Heart right ventricle (tissue), 16 donors: ENCODE measurements at regions of chr5 and their contacts with region 1.

Region 1: DNA sequence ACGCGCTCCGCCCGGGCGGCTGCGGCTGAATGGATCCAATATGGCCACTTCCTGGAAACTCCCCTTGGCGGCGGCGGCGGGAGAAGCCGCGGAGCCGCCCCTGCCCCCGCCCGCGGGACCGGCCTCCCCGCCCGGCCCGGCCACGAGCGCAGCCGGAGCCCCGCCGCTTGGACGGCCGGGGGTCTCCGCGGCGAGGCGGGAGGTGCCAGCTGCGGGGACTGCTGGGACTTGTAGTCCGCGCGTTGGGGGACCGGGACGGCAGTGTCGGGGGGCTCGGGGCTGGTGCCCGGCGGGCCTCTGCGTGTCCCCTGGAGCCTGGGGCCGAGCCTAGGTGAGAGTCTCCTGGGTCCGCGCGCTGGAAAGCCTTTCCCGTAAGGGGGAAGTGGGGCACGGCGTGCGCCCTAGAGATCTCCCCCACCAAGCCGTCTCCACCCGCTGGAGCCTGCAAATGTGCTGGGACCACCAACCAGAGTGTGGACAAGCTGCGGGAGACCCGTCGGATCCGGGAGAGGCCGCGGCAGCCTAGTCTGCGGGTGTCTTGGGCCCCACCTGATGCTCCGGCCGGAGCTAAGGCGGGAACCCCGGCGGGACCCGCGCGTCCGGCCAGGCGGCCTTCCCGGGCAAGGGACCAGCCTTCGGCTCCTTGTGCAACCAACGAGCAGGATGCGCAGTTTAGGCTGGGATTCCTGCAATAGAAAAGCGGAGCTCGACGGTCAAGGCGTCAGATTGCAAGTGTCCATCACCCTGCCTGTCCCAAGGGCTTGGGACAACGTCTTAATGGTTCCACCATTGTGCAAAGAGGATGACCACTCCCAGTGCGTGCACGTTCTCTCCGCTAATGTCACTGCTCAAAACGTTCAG is at the start of gene SEPTIN8:
- DNase-seq: peak; percentile 50 to 67
- ATAC-seq: peak; percentile 54 to 83 (median 64)
- H3K4me3 ChIP-seq: peak within 1 kb of the TSS; percentile 61 to 97 (median 87)
- H3K27ac ChIP-seq: peak within 1 kb of the TSS; percentile 64 to 93 (median 88)
- H3K4me1 ChIP-seq: peaks cover 3 to 55% (median 43%) of the 10 kb centered on the region in 9 donors
- H3K27me3 ChIP-seq: peaks cover 0 to 40% (median 0%) of the 10 kb centered on the region in 7 donors
- CTCF ChIP-seq: no peak
- total RNA-seq, gene SEPTIN8: 23.5 to 41.8 (median 31.2) TPM

Region 2: DNA sequence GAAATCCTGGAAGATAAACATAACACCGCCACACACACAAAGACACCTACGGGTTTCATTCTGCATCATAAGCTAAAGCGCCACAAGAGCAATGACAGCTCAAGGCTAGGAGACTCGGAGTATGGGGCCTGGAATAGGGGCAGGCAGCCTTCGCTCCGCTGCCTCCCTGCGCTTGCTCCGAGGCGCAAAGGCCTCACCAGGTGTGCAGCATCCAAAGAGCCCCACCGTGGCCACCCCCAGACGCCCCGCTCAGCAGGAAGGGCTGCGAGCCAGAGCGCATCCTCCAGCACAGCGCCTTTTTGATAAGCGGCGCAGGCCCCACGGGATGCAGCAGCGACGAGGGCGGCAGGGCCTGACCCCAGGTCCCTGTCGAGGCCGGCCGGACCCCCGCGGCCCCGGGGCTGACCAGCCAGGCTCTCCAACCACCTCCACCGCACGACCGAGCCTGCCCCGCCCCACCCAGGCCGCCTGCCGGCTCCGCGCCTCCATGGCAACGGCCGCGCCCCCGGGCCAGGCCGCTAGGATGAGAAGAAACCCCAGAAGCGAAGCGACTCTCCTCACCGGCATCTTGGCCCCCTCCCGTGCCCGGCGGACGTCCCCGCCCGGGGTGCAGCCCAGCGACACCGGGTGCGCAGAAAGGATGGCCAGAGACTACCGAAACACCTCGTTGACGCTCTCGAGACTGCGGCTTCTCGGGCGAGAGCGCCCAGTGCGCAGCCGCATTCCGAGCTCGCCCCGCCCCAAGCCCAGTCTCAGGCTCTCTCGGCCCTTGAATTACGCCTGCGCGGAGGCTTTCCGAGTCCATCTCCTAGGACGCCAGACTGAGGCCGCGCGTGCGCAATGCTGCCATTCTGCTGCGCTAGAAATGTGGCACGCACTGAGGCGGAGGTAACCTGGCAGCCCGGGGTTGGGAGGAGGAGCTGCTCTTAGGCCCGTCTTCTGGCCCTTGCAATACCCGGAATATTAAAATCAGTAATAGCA is 40.3 kb before region 1 on chr5 and contains the start of gene KIF3A:
- intact Hi-C with region 1: loop called in 2 of 10 experiments (anchors 5 kb)
- DNase-seq: peak; percentile 95 to 99
- ATAC-seq: peak; percentile 99 to 100 (median 100)
- H3K4me3 ChIP-seq: peak within 1 kb of the TSS; percentile 63 to 99 (median 84)
- H3K27ac ChIP-seq: peak within 1 kb of the TSS in 9 of 10 donors; percentile 50 to 82 (median 72)
- H3K4me1 ChIP-seq: peaks cover 0 to 21% (median 17%) of the 10 kb centered on the region in 9 donors
- H3K27me3 ChIP-seq: peaks cover 0 to 11% (median 0%) of the 10 kb centered on the region in 7 donors
- CTCF ChIP-seq: peak in 2 of 9 donors; percentile 26 to 35
- total RNA-seq, gene KIF3A: 10.1 to 18.6 (median 13.1) TPM

Region 3: GRCh38 chr5:132746954-132747615 is 30.4 kb before region 1 on chr5 and contains the start of gene CCNI2:
- intact Hi-C with region 1: loop called in 1 of 10 experiments (anchors 2 kb)
- DNase-seq: peak in 1 of 2 donors; percentile 37
- ATAC-seq: peak; percentile 15 to 76 (median 54)
- H3K4me3 ChIP-seq: peak within 1 kb of the TSS; percentile 1 to 58 (median 52)
- H3K27ac ChIP-seq: peak within 1 kb of the TSS in 1 of 10 donors; percentile 33
- H3K4me1 ChIP-seq: peaks cover 4 to 14% (median 9%) of the 10 kb centered on the region in 9 donors
- H3K27me3 ChIP-seq: peaks cover 0 to 62% (median 33%) of the 10 kb centered on the region in 7 donors
- CTCF ChIP-seq: peak in 6 of 9 donors; percentile 10 to 42 (median 26)
- total RNA-seq, gene CCNI2: 0.09 to 0.75 (median 0.22) TPM in 4 of 10 donors, not detected in the others

Region 4: DNA sequence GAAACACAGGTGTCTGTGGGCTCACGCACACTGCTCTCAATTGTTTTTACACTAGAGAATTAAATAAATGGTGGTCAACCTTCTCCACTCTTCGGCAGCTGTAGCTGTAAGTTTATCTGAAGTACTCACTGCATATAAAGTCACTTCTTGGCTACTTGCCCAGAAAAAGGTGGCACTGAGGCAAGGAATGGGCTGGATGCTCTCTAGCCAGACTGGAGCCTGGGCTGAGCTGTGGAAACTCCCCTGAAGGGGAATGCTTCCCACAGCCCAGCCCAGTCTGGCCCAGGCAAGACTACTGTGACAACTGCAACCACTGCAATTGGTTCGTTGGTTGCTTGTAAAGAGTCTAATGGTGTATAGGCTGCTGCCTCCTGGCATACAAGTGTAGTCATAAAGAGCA is 100.5 kb after region 1 on chr5:
- intact Hi-C with region 1: no loop called
- DNase-seq: peak; percentile 23 to 53
- ATAC-seq: peak in 7 of 8 donors; percentile 74 to 91 (median 86)
- H3K4me3 ChIP-seq: no peak overlapping the region
- H3K27ac ChIP-seq: peak overlapping the region in 7 of 10 donors; percentile 6 to 70 (median 41)
- H3K4me1 ChIP-seq: peaks cover 0 to 37% (median 9%) of the 10 kb centered on the region in 9 donors
- H3K27me3 ChIP-seq: no peaks in the 10 kb centered on the region
- CTCF ChIP-seq: no peak